Activated CD4-positive, alpha-beta memory T cell treated with anti-CD3 and anti-CD28 coated beads for 36 hours (primary cell): ENCODE measurements at regions of chr11 and their contacts with region 1.

Region 1: GRCh38 chr11:12235947-12236743 is 125.8 kb downstream of the MICAL2 start:
- DNase-seq: peak; percentile 74
- H3K4me3 Mint-ChIP-seq: no peak overlapping the region
- H3K27ac Mint-ChIP-seq: peak overlapping the region; percentile 86
- H3K4me1 Mint-ChIP-seq: peaks cover 38% of the 10 kb centered on the region
- H3K27me3 Mint-ChIP-seq: no peaks in the 10 kb centered on the region

Region 2: DNA sequence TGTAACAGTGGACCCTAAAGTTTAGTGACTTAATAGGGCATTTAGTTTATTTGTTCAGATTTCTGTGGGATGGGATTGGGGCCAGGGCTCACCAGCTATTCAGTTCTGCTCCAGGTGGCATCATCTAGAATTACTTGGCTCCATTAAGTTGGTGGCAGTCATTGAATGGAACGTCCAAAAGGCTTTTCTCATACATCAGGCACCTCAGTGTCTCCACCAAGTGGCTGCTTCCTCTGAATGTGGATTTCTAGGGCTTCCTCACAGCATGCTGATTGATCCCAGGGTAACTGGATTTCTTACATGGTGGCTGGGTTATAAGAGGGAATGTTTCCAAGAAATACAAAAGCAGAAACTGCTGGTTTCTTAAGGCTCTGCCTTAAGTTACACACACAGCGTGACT is 359.7 kb before region 1 on chr11:
- CTCF ChIA-PET with region 1: no interaction called
- POLR2A ChIA-PET with region 1: no interaction called
- intact Hi-C with region 1: no loop called
- DNase-seq: no peak
- H3K4me3 Mint-ChIP-seq: no peak overlapping the region
- H3K27ac Mint-ChIP-seq: no peak overlapping the region
- H3K4me1 Mint-ChIP-seq: peaks cover 43% of the 10 kb centered on the region
- H3K27me3 Mint-ChIP-seq: no peaks in the 10 kb centered on the region

Region 3: GRCh38 chr11:12052676-12053605 is 183.2 kb before region 1 on chr11:
- CTCF ChIA-PET with region 1: interaction called, 88 read pairs
- POLR2A ChIA-PET with region 1: interaction called, 3 read pairs
- intact Hi-C with region 1: no loop called
- DNase-seq: peak; percentile 44
- H3K4me3 Mint-ChIP-seq: no peak overlapping the region
- H3K27ac Mint-ChIP-seq: no peak overlapping the region
- H3K4me1 Mint-ChIP-seq: no peaks in the 10 kb centered on the region
- H3K27me3 Mint-ChIP-seq: no peaks in the 10 kb centered on the region

Region 4: GRCh38 chr11:12110201-12110713 is 125.9 kb before region 1 on chr11 and contains the start of gene MICAL2:
- CTCF ChIA-PET with region 1: interaction called, 6 read pairs
- POLR2A ChIA-PET with region 1: interaction called, 4 read pairs
- intact Hi-C with region 1: loop called (anchors 2 kb)
- DNase-seq: peak; percentile 91
- H3K4me3 Mint-ChIP-seq: peak within 1 kb of the TSS; percentile 82
- H3K27ac Mint-ChIP-seq: peak within 1 kb of the TSS; percentile 91
- H3K4me1 Mint-ChIP-seq: peaks cover 40% of the 10 kb centered on the region
- H3K27me3 Mint-ChIP-seq: no peaks in the 10 kb centered on the region
- total RNA-seq, gene MICAL2: 213 to 220 TPM

Region 5: GRCh38 chr11:12174477-12175143 is 61.5 kb before region 1 on chr11:
- CTCF ChIA-PET with region 1: interaction called, 3 read pairs
- POLR2A ChIA-PET with region 1: interaction called, 4 read pairs
- intact Hi-C with region 1: loop called (anchors 1 kb)
- DNase-seq: no peak
- H3K4me3 Mint-ChIP-seq: peak overlapping the region; percentile 27
- H3K27ac Mint-ChIP-seq: peak overlapping the region; percentile 93
- H3K4me1 Mint-ChIP-seq: peaks cover 68% of the 10 kb centered on the region
- H3K27me3 Mint-ChIP-seq: no peaks in the 10 kb centered on the region

Region 6: GRCh38 chr11:12200279-12201010 is 35.7 kb before region 1 on chr11:
- CTCF ChIA-PET with region 1: interaction called, 20 read pairs
- POLR2A ChIA-PET with region 1: interaction called, 8 read pairs
- intact Hi-C with region 1: loop called (anchors 2 kb)
- DNase-seq: peak; percentile 72
- H3K4me3 Mint-ChIP-seq: peak overlapping the region; percentile 26
- H3K27ac Mint-ChIP-seq: peak overlapping the region; percentile 98
- H3K4me1 Mint-ChIP-seq: peaks cover 89% of the 10 kb centered on the region
- H3K27me3 Mint-ChIP-seq: no peaks in the 10 kb centered on the region

Region 7: DNA sequence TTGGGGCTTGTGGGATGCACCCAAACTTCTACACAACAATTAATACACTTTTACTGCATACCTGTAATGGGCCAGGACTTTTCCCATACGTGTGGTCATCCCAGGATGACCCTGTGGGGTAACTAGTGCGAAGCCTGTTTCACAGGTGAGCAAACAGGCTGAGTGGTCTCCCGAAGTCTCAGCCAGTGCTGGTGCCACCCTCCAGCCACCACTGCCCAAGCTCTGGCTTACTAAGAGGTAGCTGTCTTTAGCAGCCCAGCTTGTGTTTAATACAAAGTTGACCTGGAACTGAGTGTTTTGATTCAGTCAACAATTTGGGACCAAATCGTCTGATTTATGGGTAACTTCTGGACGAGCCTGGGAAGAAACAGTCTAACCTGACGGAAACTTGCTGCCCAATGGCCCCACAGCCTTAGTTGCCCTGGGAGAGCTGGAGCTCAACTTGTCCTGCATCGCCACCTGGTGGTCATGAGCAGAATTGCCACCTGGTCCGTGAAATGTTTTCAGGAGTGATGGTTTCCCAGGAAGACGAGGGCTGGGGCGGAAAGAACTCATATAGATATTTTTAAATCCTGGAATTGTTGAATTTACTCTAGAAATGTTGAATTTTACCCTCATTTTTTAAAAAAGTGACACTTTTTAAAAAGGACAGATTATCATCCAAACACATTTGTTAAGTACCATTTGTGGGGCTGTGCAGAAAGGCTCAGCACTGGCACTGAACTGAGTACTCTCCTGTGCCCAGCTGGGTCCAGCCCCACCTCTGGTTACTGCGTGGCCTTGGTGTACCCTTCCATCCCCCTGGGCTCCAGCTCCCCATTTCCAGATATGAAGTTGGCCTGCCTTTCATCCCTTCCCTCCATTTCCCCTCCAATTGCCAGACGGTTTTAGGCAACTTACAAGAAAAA is 45.7 kb after region 1 on chr11:
- CTCF ChIA-PET with region 1: interaction called, 32 read pairs
- POLR2A ChIA-PET with region 1: no interaction called
- intact Hi-C with region 1: loop called (anchors 2 kb)
- DNase-seq: peak; percentile 86
- H3K4me3 Mint-ChIP-seq: no peak overlapping the region
- H3K27ac Mint-ChIP-seq: no peak overlapping the region
- H3K4me1 Mint-ChIP-seq: peaks cover 7% of the 10 kb centered on the region
- H3K27me3 Mint-ChIP-seq: no peaks in the 10 kb centered on the region